AG04450 (cell line): ENCODE measurements at regions of chr17 and their contacts with region 1.

Region 1: GRCh38 chr17:35088881-35089585 is 25.5 kb upstream of the RFFL start:
- DNase-seq: no peak
- H3K4me3 ChIP-seq: peak overlapping the region; percentile 65
- H3K27ac ChIP-seq: peak overlapping the region; percentile 31
- H3K27me3 ChIP-seq: no peaks in the 10 kb centered on the region
- CTCF ChIP-seq: peak; percentile 58

Region 2: DNA sequence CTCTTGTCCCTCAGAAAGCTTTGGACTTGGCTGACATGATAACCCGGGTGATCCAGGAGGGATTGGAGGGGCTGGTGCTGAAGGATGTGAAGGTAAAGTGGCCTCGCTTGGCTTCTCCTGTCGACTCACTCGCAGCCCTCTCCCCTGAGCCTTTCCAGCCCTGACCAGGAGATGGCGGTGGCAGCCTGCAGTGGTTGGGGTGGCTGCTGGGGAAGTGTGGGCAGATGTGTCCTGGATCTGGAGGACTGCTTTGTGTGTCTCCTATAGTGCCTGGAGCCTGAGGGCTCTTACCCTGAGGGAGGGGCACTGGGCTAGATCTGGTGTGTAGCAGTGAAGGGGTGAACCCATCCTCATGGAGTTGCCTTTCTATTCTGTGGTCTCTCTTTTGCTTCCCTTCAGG is 90.8 kb before region 1 on chr17:
- CTCF ChIA-PET with region 1: interaction called, 19 read pairs
- POLR2A ChIA-PET with region 1: no interaction called
- DNase-seq: peak; percentile 51
- H3K4me3 ChIP-seq: no peak overlapping the region
- H3K27ac ChIP-seq: peak overlapping the region; percentile 63
- H3K27me3 ChIP-seq: no peaks in the 10 kb centered on the region
- CTCF ChIP-seq: peak; percentile 93

Region 3: GRCh38 chr17:35022536-35023063 is 66.4 kb before region 1 on chr17:
- CTCF ChIA-PET with region 1: interaction called, 20 read pairs
- POLR2A ChIA-PET with region 1: interaction called, 3 read pairs
- DNase-seq: peak; percentile 65
- H3K4me3 ChIP-seq: no peak overlapping the region
- H3K27ac ChIP-seq: peak overlapping the region; percentile 91
- H3K27me3 ChIP-seq: no peaks in the 10 kb centered on the region
- CTCF ChIP-seq: peak; percentile 58

Region 4: GRCh38 chr17:35063514-35064223 is 25.4 kb before region 1 on chr17 and contains the start of gene RFFL:
- CTCF ChIA-PET with region 1: interaction called, 28 read pairs
- POLR2A ChIA-PET with region 1: interaction called, 5 read pairs
- DNase-seq: peak; percentile 93
- H3K4me3 ChIP-seq: peak within 1 kb of the TSS; percentile 50
- H3K27ac ChIP-seq: peak within 1 kb of the TSS; percentile 98
- H3K27me3 ChIP-seq: no peaks in the 10 kb centered on the region
- CTCF ChIP-seq: peak; percentile 18
- polyA plus RNA-seq, gene RFFL: 11.0 and 14.4 TPM in 2 replicates

Region 5: GRCh38 chr17:35103271-35103670 is 14.2 kb after region 1 on chr17:
- CTCF ChIA-PET with region 1: interaction called, 13 read pairs
- POLR2A ChIA-PET with region 1: no interaction called
- DNase-seq: no peak
- H3K4me3 ChIP-seq: no peak overlapping the region
- H3K27ac ChIP-seq: no peak overlapping the region
- H3K27me3 ChIP-seq: no peaks in the 10 kb centered on the region
- CTCF ChIP-seq: no peak

Region 6: GRCh38 chr17:35127751-35128514 is 38.9 kb after region 1 on chr17:
- CTCF ChIA-PET with region 1: interaction called, 23 read pairs
- POLR2A ChIA-PET with region 1: interaction called, 3 read pairs
- DNase-seq: peak; percentile 96
- H3K4me3 ChIP-seq: no peak overlapping the region
- H3K27ac ChIP-seq: peak overlapping the region; percentile 95
- H3K27me3 ChIP-seq: no peaks in the 10 kb centered on the region
- CTCF ChIP-seq: no peak

Region 7: GRCh38 chr17:35148144-35148543 is 59.1 kb after region 1 on chr17:
- CTCF ChIA-PET with region 1: no interaction called
- POLR2A ChIA-PET with region 1: no interaction called
- DNase-seq: no peak
- H3K4me3 ChIP-seq: no peak overlapping the region
- H3K27ac ChIP-seq: no peak overlapping the region
- H3K27me3 ChIP-seq: peaks cover 12% of the 10 kb centered on the region
- CTCF ChIP-seq: no peak